Naive thymus-derived CD4-positive, alpha-beta T cell (primary cell): ENCODE measurements at regions of chr4 and their contacts with region 1.

Region 1: GRCh38 chr4:99885063-99885664 is 9.1 kb downstream of the LAMTOR3 start:
- DNase-seq: peak in 7 of 9 donors; percentile 34 to 64 (median 54)
- ATAC-seq: peak; percentile 72
- H3K4me3 ChIP-seq: no peak overlapping the region
- H3K4me3 Mint-ChIP-seq: no peak overlapping the region
- H3K27ac ChIP-seq: no peak overlapping the region
- H3K27ac Mint-ChIP-seq: no peak overlapping the region
- H3K4me1 ChIP-seq: peaks cover 0 to 2% of the 10 kb centered on the region in 2 donors
- H3K4me1 Mint-ChIP-seq: peaks cover 0 to 19% (median 13%) of the 10 kb centered on the region in 7 donors
- H3K27me3 ChIP-seq: no peaks in the 10 kb centered on the region
- H3K27me3 Mint-ChIP-seq: no peaks in the 10 kb centered on the region

Region 2: GRCh38 chr4:99043346-99043745 is 841.8 kb before region 1 on chr4:
- CTCF ChIA-PET with region 1: no interaction called
- POLR2A ChIA-PET with region 1: no interaction called
- intact Hi-C with region 1: no loop called
- DNase-seq: peak in 7 of 9 donors; percentile 22 to 79 (median 66)
- ATAC-seq: peak; percentile 93
- H3K4me3 ChIP-seq: no peak overlapping the region
- H3K4me3 Mint-ChIP-seq: peak overlapping the region in 9 of 10 donors; percentile 11 to 79 (median 64)
- H3K27ac ChIP-seq: peak overlapping the region; percentile 55
- H3K27ac Mint-ChIP-seq: peak overlapping the region; percentile 80 to 90 (median 85)
- H3K4me1 ChIP-seq: peaks cover 14 to 15% of the 10 kb centered on the region in 2 donors
- H3K4me1 Mint-ChIP-seq: peaks cover 10 to 31% (median 24%) of the 10 kb centered on the region in 7 donors
- H3K27me3 ChIP-seq: no peaks in the 10 kb centered on the region
- H3K27me3 Mint-ChIP-seq: no peaks in the 10 kb centered on the region

Region 3: DNA sequence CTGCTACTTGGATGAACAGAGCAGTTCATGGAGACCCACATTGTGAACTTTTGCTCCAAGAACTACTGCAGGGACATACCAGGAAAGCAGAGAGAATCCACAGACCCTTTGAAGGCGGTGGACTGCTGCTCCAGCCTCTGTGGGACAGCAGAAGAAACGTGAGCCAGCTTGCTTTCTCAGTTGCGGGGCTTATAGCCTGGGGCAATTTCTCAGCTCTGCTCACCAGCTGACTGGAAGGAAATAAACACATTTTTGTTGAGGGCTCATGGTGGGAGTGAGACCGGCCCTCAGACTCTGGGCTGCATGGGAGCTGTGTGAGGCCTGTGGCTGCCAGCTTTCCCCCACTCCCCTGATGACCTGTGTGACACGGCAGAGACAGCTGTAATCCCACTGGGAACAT is 591.8 kb before region 1 on chr4:
- CTCF ChIA-PET with region 1: no interaction called
- POLR2A ChIA-PET with region 1: no interaction called
- intact Hi-C with region 1: no loop called
- DNase-seq: no peak
- ATAC-seq: no peak
- H3K4me3 ChIP-seq: no peak overlapping the region
- H3K4me3 Mint-ChIP-seq: no peak overlapping the region
- H3K27ac ChIP-seq: no peak overlapping the region
- H3K27ac Mint-ChIP-seq: no peak overlapping the region
- H3K4me1 ChIP-seq: no peaks in the 10 kb centered on the region
- H3K4me1 Mint-ChIP-seq: no peaks in the 10 kb centered on the region
- H3K27me3 ChIP-seq: no peaks in the 10 kb centered on the region
- H3K27me3 Mint-ChIP-seq: peaks cover 0 to 31% (median 20%) of the 10 kb centered on the region in 5 donors

Region 4: DNA sequence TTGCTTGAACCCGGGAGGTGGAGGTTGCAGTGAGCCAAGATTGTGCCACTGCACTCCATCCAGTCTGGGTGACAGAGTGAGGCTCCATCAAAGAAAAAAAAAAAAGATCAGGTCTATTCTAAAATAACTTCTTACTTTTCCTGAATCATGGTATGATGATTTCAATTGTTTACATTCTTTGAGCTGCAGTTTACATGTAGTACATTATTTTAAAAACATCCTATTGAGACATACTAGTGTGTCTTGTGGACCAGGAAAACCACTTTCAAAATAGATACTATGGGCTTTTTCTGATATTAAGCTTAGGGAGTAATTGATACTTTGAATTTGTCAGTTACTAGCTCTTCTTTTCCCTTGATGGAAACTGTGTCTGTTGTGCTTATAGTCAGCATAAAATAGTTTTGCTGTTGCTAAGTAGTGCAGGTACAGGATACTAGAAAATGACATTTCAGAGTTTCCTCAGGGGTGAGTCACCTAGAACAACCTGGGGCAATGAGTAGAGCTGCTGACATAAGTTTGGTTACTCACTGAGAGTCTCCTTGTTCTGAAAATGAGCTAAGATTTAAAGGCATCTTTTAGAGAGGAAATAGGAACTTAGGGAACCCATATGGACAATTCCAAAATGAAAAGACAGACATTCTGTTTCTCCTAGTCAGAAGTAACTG is 174.4 kb before region 1 on chr4:
- CTCF ChIA-PET with region 1: no interaction called
- POLR2A ChIA-PET with region 1: no interaction called
- intact Hi-C with region 1: no loop called
- DNase-seq: no peak
- ATAC-seq: no peak
- H3K4me3 ChIP-seq: no peak overlapping the region
- H3K4me3 Mint-ChIP-seq: no peak overlapping the region
- H3K27ac ChIP-seq: no peak overlapping the region
- H3K27ac Mint-ChIP-seq: no peak overlapping the region
- H3K4me1 ChIP-seq: no peaks in the 10 kb centered on the region
- H3K4me1 Mint-ChIP-seq: no peaks in the 10 kb centered on the region
- H3K27me3 ChIP-seq: no peaks in the 10 kb centered on the region
- H3K27me3 Mint-ChIP-seq: peaks cover 0 to 11% (median 1%) of the 10 kb centered on the region in 5 donors

Region 5: DNA sequence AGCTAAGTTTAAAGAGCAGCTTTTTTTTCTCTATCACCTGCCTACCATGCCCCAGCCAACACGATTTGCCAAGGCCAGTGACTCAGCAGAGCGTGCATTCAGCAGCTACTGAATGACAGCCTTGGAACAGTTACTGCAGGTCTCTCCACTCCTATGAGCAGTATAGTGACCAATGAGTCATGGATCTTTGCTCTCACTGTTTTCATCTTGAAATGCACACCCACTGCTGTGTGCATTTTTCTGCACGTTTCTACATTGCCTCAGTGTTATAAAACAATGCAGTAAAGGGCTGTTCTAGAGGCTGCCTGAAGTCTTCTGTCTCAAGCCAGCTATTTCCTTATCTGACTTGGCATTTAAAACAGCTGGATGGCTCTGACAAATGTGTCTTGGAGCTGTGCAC is 161.6 kb before region 1 on chr4:
- CTCF ChIA-PET with region 1: no interaction called
- POLR2A ChIA-PET with region 1: no interaction called
- intact Hi-C with region 1: loop called in 1 of 2 experiments (anchors 5 kb)
- DNase-seq: no peak
- ATAC-seq: no peak
- H3K4me3 ChIP-seq: no peak overlapping the region
- H3K4me3 Mint-ChIP-seq: no peak overlapping the region
- H3K27ac ChIP-seq: no peak overlapping the region
- H3K27ac Mint-ChIP-seq: no peak overlapping the region
- H3K4me1 ChIP-seq: no peaks in the 10 kb centered on the region
- H3K4me1 Mint-ChIP-seq: no peaks in the 10 kb centered on the region
- H3K27me3 ChIP-seq: no peaks in the 10 kb centered on the region
- H3K27me3 Mint-ChIP-seq: peaks cover 0 to 13% (median 9%) of the 10 kb centered on the region in 5 donors

Region 6: DNA sequence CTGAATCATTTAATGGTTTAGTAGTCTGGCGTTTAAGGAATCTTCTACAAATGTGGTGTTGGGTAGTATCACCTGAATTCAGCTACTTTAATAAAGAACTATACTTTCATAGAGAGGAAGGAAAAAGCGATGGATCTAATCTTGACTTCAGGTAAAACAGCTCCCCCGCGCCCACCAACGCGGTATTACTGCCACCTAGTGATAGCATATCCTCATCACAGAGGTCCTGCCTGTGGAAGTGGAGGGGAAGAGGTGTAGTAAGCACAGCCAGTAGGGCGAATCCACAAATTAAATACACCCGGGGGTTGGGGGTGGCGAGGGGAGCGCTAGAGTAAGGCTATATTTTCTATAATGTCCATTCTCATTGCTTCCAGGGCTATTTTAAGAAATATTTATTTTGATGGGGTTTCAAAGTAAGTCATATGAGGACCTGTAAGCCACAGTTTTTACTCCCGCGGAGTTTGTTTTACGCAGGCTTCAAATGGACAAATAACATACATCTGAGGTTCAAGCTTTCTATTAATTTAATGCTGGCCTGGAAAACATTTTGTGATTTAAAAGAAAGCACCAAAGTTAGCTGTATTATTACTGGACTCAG is 76.8 kb before region 1 on chr4:
- CTCF ChIA-PET with region 1: interaction called, 27 read pairs
- POLR2A ChIA-PET with region 1: interaction called, 3 read pairs
- intact Hi-C with region 1: loop called (anchors 1 kb)
- DNase-seq: peak; percentile 28 to 78 (median 72)
- ATAC-seq: peak; percentile 92
- H3K4me3 ChIP-seq: no peak overlapping the region
- H3K4me3 Mint-ChIP-seq: no peak overlapping the region
- H3K27ac ChIP-seq: no peak overlapping the region
- H3K27ac Mint-ChIP-seq: no peak overlapping the region
- H3K4me1 ChIP-seq: no peaks in the 10 kb centered on the region
- H3K4me1 Mint-ChIP-seq: peaks cover 4 to 10% (median 5%) of the 10 kb centered on the region in 7 donors
- H3K27me3 ChIP-seq: no peaks in the 10 kb centered on the region
- H3K27me3 Mint-ChIP-seq: peaks cover 0 to 17% (median 7%) of the 10 kb centered on the region in 5 donors

Region 7: DNA sequence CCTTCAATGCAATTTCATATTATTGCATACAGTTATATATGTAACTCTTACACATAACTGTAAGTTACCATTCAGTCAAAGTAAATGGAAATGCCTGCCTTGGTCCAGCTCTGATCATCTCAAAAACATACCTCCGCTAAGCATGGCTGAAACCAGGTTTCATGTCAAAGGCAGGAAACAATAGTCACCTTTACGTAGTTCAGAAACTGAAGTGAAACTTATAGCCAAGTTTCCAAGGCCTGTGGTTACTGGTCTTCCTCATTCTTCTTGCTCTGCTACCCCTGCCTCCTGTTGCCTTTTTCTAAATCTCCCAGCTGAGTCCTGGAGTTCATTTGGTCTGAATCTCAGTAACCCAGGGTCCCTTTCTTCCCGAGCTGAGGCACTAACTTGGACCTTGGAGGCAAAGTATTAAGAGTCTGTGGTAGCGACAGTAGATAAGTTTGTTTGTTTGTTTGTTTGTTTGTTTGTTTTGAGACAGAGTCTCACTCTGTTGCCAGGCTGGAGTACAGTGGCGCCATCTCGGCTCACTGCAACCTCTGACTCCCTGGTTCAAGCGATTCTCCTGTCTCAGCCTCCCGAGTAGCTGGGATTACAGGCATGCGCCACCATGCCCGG is 37.7 kb before region 1 on chr4:
- CTCF ChIA-PET with region 1: interaction called, 5 read pairs
- POLR2A ChIA-PET with region 1: interaction called, 3 read pairs
- intact Hi-C with region 1: loop called (anchors 2 kb)
- DNase-seq: peak in 6 of 9 donors; percentile 13 to 39 (median 26)
- ATAC-seq: peak; percentile 61
- H3K4me3 ChIP-seq: peak overlapping the region; percentile 9
- H3K4me3 Mint-ChIP-seq: peak overlapping the region in 9 of 10 donors; percentile 49 to 85 (median 75)
- H3K27ac ChIP-seq: peak overlapping the region; percentile 70
- H3K27ac Mint-ChIP-seq: peak overlapping the region; percentile 88 to 99 (median 96)
- H3K4me1 ChIP-seq: peaks cover 8 to 27% of the 10 kb centered on the region in 2 donors
- H3K4me1 Mint-ChIP-seq: peaks cover 31 to 75% (median 65%) of the 10 kb centered on the region in 7 donors
- H3K27me3 ChIP-seq: no peaks in the 10 kb centered on the region
- H3K27me3 Mint-ChIP-seq: no peaks in the 10 kb centered on the region

Region 8: GRCh38 chr4:99868126-99868596 is 17.0 kb before region 1 on chr4:
- CTCF ChIA-PET with region 1: no interaction called
- POLR2A ChIA-PET with region 1: no interaction called
- intact Hi-C with region 1: loop called in 1 of 2 experiments (anchors 2 kb)
- DNase-seq: no peak
- ATAC-seq: no peak
- H3K4me3 ChIP-seq: no peak overlapping the region
- H3K4me3 Mint-ChIP-seq: no peak overlapping the region
- H3K27ac ChIP-seq: no peak overlapping the region
- H3K27ac Mint-ChIP-seq: peak overlapping the region in 1 of 9 donors; percentile 49
- H3K4me1 ChIP-seq: no peaks in the 10 kb centered on the region
- H3K4me1 Mint-ChIP-seq: peaks cover 0 to 21% (median 0%) of the 10 kb centered on the region in 7 donors
- H3K27me3 ChIP-seq: no peaks in the 10 kb centered on the region
- H3K27me3 Mint-ChIP-seq: no peaks in the 10 kb centered on the region

Region 9: DNA sequence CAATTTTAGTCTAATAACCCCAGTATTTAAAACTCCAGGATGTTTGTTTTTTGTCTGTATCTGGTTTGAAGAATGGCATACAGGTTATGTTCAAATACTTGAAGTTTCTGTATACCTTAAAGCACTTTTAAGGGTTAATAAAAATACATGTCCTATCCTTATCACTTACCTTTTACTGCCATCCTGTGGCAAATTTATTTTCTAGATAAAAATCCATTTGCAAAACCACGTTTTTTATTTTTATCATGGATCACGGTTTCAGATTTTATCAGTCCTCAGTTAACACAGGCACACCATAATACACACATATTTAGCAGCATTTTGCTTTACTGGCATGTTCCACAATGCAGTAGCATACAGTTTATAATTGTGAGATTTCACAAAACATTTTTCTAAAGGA is 178.2 kb after region 1 on chr4:
- CTCF ChIA-PET with region 1: no interaction called
- POLR2A ChIA-PET with region 1: no interaction called
- intact Hi-C with region 1: loop called in 1 of 2 experiments (anchors 1 kb)
- DNase-seq: peak in 5 of 9 donors; percentile 4 to 23 (median 5)
- ATAC-seq: no peak
- H3K4me3 ChIP-seq: no peak overlapping the region
- H3K4me3 Mint-ChIP-seq: no peak overlapping the region
- H3K27ac ChIP-seq: no peak overlapping the region
- H3K27ac Mint-ChIP-seq: no peak overlapping the region
- H3K4me1 ChIP-seq: no peaks in the 10 kb centered on the region
- H3K4me1 Mint-ChIP-seq: peaks cover 0 to 6% (median 0%) of the 10 kb centered on the region in 7 donors
- H3K27me3 ChIP-seq: no peaks in the 10 kb centered on the region
- H3K27me3 Mint-ChIP-seq: peaks cover 4 to 33% (median 22%) of the 10 kb centered on the region in 5 donors